Activated CD4-positive, alpha-beta T cell treated with anti-CD3 and anti-CD28 coated beads for 36 hours (primary cell): ENCODE measurements at regions of chr13 and their contacts with region 1.

Region 1: DNA sequence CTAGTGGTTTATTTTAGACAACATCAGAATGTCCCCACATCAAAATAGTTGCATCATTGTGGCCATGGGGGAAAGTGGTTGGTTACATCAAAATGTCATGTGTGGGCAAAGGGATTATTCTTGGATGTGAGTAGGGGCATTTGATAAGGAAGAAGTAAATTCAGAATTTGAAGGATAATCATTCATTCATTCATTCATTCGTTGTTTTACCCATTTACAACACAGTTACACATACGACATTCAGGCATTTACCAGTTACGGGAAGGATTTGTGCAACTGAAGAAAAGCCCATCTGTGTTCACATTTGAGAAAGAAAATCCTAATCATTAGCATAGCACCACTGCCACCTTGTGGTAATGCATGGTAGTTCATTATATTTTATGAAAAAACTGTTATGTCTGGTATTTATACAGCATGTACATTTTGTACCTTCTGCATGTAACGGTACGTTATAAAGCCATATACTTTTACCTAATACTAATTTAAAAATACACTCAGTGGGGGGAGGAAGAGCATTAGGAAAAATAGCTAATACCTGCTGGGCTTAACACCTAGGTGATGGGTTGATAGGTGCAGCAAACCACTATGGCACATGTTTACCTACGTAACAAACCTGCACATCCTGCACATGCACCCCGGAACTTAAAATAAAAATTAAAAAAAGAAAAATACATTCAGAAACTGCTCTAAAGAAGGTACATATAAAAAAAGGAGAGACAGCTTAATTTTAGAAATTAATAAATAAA is 62.1 kb downstream of the DGKH start:
- DNase-seq: peak; percentile 47
- ATAC-seq: peak; percentile 69
- H3K4me3 Mint-ChIP-seq: no peak overlapping the region
- H3K27ac Mint-ChIP-seq: peak overlapping the region; percentile 29
- H3K4me1 Mint-ChIP-seq: peaks cover 5% of the 10 kb centered on the region
- H3K27me3 Mint-ChIP-seq: no peaks in the 10 kb centered on the region

Region 2: DNA sequence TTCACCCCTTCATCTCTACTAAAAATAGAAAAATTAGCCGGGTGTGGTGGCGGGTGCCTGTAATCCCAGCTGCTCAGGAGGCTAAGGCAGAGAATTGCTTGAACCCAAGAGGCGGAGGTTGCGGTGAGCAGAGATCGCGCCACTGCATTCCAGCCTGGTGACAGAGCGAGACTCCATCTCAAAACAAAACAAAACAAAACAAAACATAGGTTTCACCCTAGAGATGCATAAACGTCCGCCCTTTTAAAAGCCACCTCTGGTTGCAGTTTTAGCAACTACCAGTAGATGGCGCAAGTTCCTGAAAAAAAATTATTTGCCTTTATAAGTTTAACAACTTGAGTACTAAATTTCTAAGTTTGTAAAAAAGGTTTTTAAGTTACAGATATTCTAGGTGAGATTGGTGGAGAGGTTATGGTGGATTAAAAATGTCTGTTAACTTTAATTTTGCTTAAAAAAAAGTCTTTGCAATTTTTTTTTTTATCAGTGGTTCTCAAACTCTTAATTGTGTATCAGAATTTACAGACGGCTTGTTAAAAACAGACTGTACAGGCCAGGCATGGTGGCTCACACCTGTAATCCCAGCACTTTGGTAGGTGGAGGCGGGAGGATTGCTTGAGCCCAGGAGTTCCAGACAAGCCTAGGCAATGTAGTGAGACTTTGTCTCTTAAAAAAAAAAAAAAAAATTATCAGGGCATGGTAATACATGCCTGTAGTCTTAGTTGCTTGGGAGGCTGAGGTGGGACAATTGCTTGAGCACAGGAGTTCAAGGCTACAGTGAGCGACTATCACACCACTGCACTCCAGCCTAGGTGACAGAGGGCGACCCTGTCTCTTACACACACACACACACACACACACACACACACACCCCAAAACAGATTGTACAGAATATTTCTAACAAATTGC is 757.4 kb before region 1 on chr13:
- CTCF ChIA-PET with region 1: no interaction called
- POLR2A ChIA-PET with region 1: no interaction called
- intact Hi-C with region 1: loop called in 1 of 2 experiments (anchors 10 kb)
- DNase-seq: peak; percentile 55
- ATAC-seq: peak; percentile 54
- H3K4me3 Mint-ChIP-seq: no peak overlapping the region
- H3K27ac Mint-ChIP-seq: peak overlapping the region; percentile 78
- H3K4me1 Mint-ChIP-seq: peaks cover 55% of the 10 kb centered on the region
- H3K27me3 Mint-ChIP-seq: no peaks in the 10 kb centered on the region

Region 3: GRCh38 chr13:41411522-41411921 is 699.1 kb before region 1 on chr13:
- CTCF ChIA-PET with region 1: interaction called, 3 read pairs
- POLR2A ChIA-PET with region 1: no interaction called
- intact Hi-C with region 1: loop called in 1 of 2 experiments (anchors 10 kb)
- DNase-seq: peak; percentile 42
- ATAC-seq: peak; percentile 65
- H3K4me3 Mint-ChIP-seq: no peak overlapping the region
- H3K27ac Mint-ChIP-seq: no peak overlapping the region
- H3K4me1 Mint-ChIP-seq: peaks cover 2% of the 10 kb centered on the region
- H3K27me3 Mint-ChIP-seq: no peaks in the 10 kb centered on the region

Region 4: DNA sequence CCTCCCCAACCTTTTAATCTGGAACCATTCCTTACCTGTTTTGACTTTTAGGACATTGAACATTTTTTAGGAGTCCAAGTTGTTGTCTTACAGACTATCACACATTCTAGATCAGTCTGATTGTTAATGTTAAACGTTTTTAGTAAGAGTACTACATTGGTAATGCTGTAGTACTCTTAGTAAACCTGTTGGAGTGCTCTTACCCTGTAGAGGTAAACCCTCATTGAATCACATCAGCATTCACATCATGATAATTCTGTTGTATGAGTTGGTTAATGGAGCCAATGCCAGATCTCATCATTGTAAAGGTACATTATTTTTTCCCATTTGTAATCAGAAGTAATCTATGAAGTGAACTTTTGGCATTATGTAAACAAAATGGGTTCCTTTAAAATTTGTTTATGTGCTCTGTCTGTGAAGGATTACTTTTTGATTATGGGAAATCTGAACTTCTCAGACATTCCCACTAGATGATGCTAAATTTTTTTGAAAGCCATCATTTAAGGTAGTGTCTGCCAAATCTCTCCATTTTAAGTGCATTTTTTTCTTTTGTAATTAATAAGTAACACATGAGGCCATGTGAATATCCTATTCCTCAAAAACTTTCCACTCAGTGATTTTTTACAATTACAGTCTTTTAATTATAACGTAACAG is 204.9 kb before region 1 on chr13:
- CTCF ChIA-PET with region 1: interaction called, 8 read pairs
- POLR2A ChIA-PET with region 1: no interaction called
- intact Hi-C with region 1: loop called (anchors 1 kb)
- DNase-seq: no peak
- ATAC-seq: peak; percentile 78
- H3K4me3 Mint-ChIP-seq: no peak overlapping the region
- H3K27ac Mint-ChIP-seq: peak overlapping the region; percentile 3
- H3K4me1 Mint-ChIP-seq: peaks cover 35% of the 10 kb centered on the region
- H3K27me3 Mint-ChIP-seq: no peaks in the 10 kb centered on the region

Region 5: GRCh38 chr13:42048682-42049453 is 61.7 kb before region 1 on chr13:
- CTCF ChIA-PET with region 1: no interaction called
- POLR2A ChIA-PET with region 1: no interaction called
- intact Hi-C with region 1: loop called in 1 of 2 experiments (anchors 2 kb)
- DNase-seq: peak; percentile 82
- ATAC-seq: peak; percentile 68
- H3K4me3 Mint-ChIP-seq: peak overlapping the region; percentile 86
- H3K27ac Mint-ChIP-seq: no peak overlapping the region
- H3K4me1 Mint-ChIP-seq: peaks cover 24% of the 10 kb centered on the region
- H3K27me3 Mint-ChIP-seq: no peaks in the 10 kb centered on the region